Breast epithelium (tissue), 4 donors: ENCODE measurements at regions of chr7 and their contacts with region 1.

Region 1: GRCh38 chr7:4201566-4201965 is 480.5 kb upstream of the FOXK1 start:
- DNase-seq: no peak
- H3K4me3 ChIP-seq: no peak overlapping the region
- H3K27ac ChIP-seq: no peak overlapping the region
- H3K4me1 ChIP-seq: no peaks in the 10 kb centered on the region
- H3K27me3 ChIP-seq: no peaks in the 10 kb centered on the region
- CTCF ChIP-seq: no peak
- POLR2A ChIP-seq: no peak

Region 2: GRCh38 chr7:4166340-4166739 is 35.2 kb before region 1 on chr7:
- intact Hi-C with region 1: loop called (anchors 1 kb)
- DNase-seq: no peak
- H3K4me3 ChIP-seq: no peak overlapping the region
- H3K27ac ChIP-seq: no peak overlapping the region
- H3K4me1 ChIP-seq: no peaks in the 10 kb centered on the region
- H3K27me3 ChIP-seq: peaks cover 0 to 4% of the 10 kb centered on the region in 2 donors
- CTCF ChIP-seq: no peak
- POLR2A ChIP-seq: no peak